ENCODE measurements at regions of chr14 and their contacts with region 1.

Region 1: DNA sequence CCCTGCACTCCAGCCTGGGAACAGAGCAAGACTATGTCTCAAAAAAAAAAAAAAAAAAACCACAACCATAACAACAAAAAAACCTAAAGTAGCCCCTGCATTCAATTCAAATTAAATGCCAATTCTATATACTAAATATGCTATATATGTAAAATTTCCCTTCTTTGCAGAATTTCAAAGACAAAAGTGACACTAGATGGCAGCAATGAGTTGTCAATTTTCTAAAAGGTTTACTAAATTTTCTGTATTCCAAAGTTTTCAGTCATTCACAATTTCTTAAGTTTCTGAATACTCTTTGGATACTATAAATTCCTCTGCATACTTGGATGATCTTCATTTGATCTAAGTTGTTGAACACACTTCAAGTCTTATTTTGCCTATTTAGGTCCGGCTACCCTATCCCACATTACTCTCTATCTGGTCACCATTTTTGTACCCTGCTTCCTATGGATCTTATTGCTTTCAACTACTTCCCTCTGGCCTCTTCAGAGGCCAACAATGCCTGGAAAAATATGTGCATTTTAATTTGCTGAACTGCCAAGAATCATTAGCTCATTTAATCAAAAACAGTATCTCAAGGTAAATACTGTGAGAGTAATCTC is 27.9 kb downstream of the HNRNPC start:
- DNase-seq: no peak
- H3K4me3 Mint-ChIP-seq: no peak overlapping the region
- H3K27ac Mint-ChIP-seq: no peak overlapping the region
- H3K4me1 Mint-ChIP-seq: peaks cover 40% of the 10 kb centered on the region
- H3K27me3 Mint-ChIP-seq: no peaks in the 10 kb centered on the region

Region 2: GRCh38 chr14:21136024-21136423 is 105.3 kb before region 1 on chr14:
- intact Hi-C with region 1: no loop called
- DNase-seq: no peak
- H3K4me3 Mint-ChIP-seq: no peak overlapping the region
- H3K27ac Mint-ChIP-seq: no peak overlapping the region
- H3K4me1 Mint-ChIP-seq: no peaks in the 10 kb centered on the region
- H3K27me3 Mint-ChIP-seq: peaks cover 4% of the 10 kb centered on the region

Region 3: GRCh38 chr14:21168055-21168454 is 73.3 kb before region 1 on chr14:
- intact Hi-C with region 1: no loop called
- DNase-seq: no peak
- H3K4me3 Mint-ChIP-seq: no peak overlapping the region
- H3K27ac Mint-ChIP-seq: no peak overlapping the region
- H3K4me1 Mint-ChIP-seq: peaks cover 3% of the 10 kb centered on the region
- H3K27me3 Mint-ChIP-seq: peaks cover 30% of the 10 kb centered on the region

Region 4: GRCh38 chr14:21203470-21204166 is 37.7 kb before region 1 on chr14:
- intact Hi-C with region 1: loop called (anchors 5 kb)
- DNase-seq: no peak
- H3K4me3 Mint-ChIP-seq: no peak overlapping the region
- H3K27ac Mint-ChIP-seq: peak overlapping the region; percentile 47
- H3K4me1 Mint-ChIP-seq: peaks cover 13% of the 10 kb centered on the region
- H3K27me3 Mint-ChIP-seq: no peaks in the 10 kb centered on the region

Measured in activated T-helper 2 cell treated with anti-CD3 and anti-CD28 coated beads, Interferon-gamma antibody, Interleukin-2, Interleukin-4, amounts not matched to agents 10 μg/mL and 5 μg/mL and 100 μg/mL, durations not matched to agents 14 hours and 24 hours and 36 hours (primary cell).